ENCODE measurements at regions of chr3 and their contacts with region 1.

Region 1: GRCh38 chr3:141360888-141361598 is 7.3 kb upstream of the ZBTB38 start:
- DNase-seq: no peak
- H3K4me3 ChIP-seq: no peak overlapping the region
- H3K27ac ChIP-seq: no peak overlapping the region
- H3K4me1 ChIP-seq: no peaks in the 10 kb centered on the region
- H3K27me3 ChIP-seq: no peaks in the 10 kb centered on the region
- CTCF ChIP-seq: peak in 2 of 3 experiments; percentile 74 to 87; a peak in 3 of 4 replicates
- EP300 ChIP-seq: no peak
- POLR2A ChIP-seq: no peak
- RAD21 ChIP-seq: peak; percentile 90 to 97

Region 2: DNA sequence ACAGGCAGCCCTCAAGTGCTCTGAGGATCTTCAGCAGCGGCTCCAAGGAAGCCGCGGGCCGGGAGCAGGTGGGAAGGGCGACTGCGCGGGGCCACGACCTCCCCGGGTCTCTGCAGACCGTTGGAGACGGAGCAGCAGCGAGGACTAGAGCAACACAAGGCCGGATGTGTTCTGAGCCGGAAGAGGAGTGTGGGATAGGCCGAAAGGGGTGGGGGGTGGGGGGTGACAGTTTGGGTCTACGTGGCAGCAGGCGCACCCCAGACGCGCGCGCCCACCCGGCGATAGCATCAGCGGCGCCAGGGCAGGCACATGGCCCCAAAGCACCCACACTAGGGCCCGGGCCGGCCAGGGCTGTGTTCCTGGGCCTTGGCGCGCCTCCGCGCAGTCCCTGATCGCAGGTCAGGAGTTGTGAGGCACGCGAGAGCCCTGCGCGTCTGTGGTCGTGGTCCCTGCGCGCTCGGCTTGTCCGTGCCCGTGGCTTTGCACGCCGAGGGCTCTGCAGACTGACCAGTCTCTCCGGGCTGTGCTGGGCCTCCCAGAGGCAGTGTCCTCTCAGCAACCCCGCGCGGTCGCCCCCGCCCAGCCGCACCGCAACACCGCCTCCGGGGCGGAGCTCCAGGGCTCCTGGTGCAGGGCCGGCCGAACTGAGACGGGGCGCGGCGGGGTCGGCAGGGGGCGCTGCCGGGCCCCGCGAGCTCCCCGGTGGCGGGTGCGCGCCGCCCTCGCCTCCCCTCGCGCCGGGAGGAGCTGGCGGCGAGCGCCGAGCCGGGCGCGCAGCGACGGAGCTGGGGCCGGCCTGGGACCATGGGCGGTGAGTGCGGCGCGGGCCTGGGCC is 129.7 kb before region 1 on chr3 and contains the start of gene PXYLP1:
- CTCF ChIA-PET with region 1: no interaction called
- POLR2A ChIA-PET with region 1: no interaction called
- DNase-seq: peak; percentile 41 to 94
- H3K4me3 ChIP-seq: peak within 1 kb of the TSS; percentile 65 to 78 (median 68)
- H3K27ac ChIP-seq: no peak within 1 kb of the TSS; the same call in 1 of the 2 replicates
- H3K4me1 ChIP-seq: peaks cover 4 to 12% (median 6%) of the 10 kb centered on the region in 4 experiments; a peak in 5 of 7 replicates
- H3K27me3 ChIP-seq: peaks cover 0 to 21% (median 15%) of the 10 kb centered on the region in 4 experiments; a peak in 4 of 7 replicates
- CTCF ChIP-seq: peak; percentile 68 to 86 (median 76)
- EP300 ChIP-seq: no peak
- POLR2A ChIP-seq: peak in 1 of 2 experiments; percentile 67; a peak in 1 of 3 replicates
- RAD21 ChIP-seq: peak; percentile 12 to 62; a peak in 3 of 4 replicates
- total RNA-seq, gene PXYLP1: 17.6 and 19.4 TPM in 2 replicates

Region 3: GRCh38 chr3:141331377-141332318 is 29.4 kb before region 1 on chr3:
- CTCF ChIA-PET with region 1: interaction called, 10 read pairs
- POLR2A ChIA-PET with region 1: no interaction called
- DNase-seq: no peak
- H3K4me3 ChIP-seq: no peak overlapping the region
- H3K27ac ChIP-seq: no peak overlapping the region
- H3K4me1 ChIP-seq: peaks cover 0 to 6% (median 3%) of the 10 kb centered on the region in 4 experiments; a peak in 3 of 7 replicates
- H3K27me3 ChIP-seq: no peaks in the 10 kb centered on the region
- CTCF ChIP-seq: no peak
- EP300 ChIP-seq: no peak
- POLR2A ChIP-seq: no peak
- RAD21 ChIP-seq: no peak

Region 4: DNA sequence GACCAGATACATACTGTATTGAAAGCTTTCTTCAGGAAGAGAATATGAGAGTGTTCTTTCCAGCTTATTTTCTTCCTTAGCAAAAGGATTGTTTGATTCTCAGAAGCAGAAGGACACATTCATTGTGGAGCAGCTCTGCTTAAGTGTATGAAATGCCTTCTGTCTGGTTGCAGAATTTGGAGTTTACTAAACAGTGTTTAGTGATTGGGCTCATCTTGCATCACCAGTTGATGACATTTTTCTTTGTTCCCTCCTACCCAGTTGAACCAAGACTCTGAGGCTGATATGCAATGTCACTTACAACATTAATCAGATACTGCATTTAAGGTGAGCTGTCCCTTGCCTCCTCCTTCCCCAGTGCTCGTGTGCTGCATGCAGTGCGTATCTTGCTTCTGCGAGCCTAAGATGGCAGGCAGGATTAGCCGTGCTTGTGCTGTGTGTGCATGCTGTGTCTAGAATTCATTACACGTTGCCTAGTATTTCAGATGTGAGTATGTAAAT is 25.6 kb after region 1 on chr3:
- CTCF ChIA-PET with region 1: interaction called, 31 read pairs
- POLR2A ChIA-PET with region 1: no interaction called
- DNase-seq: no peak
- H3K4me3 ChIP-seq: no peak overlapping the region
- H3K27ac ChIP-seq: no peak overlapping the region
- H3K4me1 ChIP-seq: peaks cover 0 to 11% (median 5%) of the 10 kb centered on the region in 4 experiments; a peak in 4 of 7 replicates
- H3K27me3 ChIP-seq: no peaks in the 10 kb centered on the region
- CTCF ChIP-seq: no peak
- EP300 ChIP-seq: no peak
- POLR2A ChIP-seq: no peak
- RAD21 ChIP-seq: no peak

Region 5: DNA sequence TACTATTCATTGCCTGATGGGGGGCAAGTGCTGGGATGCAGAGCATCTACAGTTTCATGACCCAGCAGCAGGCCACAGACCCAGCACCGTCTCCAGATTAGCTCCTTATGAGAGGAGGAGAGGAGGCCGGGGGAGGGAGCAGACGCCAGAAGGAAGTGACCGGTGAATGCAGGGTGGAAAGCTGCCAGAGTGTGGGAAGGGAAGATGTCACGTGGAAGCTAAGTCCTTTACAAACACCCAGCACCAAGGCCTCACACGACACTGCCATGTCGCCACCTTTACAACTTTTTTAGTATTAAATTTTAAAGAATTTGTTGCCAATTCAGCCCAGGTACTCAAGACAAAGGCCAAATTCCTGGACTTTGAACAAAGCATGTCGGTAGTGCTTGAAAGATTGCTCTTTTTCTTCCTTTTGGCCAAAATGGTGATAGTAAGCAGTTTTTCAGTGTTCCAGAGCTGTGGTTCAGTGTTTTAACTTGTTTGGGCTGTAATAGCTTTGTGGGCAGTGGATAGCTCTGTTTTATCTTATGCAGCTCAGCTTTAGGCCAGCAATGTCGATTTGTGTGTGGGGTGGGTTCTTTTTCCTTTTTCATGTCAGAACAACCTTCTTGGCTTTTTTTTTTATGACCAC is 65.5 kb after region 1 on chr3:
- CTCF ChIA-PET with region 1: interaction called, 30 read pairs
- POLR2A ChIA-PET with region 1: no interaction called
- DNase-seq: no peak
- H3K4me3 ChIP-seq: no peak overlapping the region
- H3K27ac ChIP-seq: no peak overlapping the region
- H3K4me1 ChIP-seq: peaks cover 0 to 8% (median 3%) of the 10 kb centered on the region in 4 experiments; a peak in 4 of 7 replicates
- H3K27me3 ChIP-seq: no peaks in the 10 kb centered on the region
- CTCF ChIP-seq: no peak
- EP300 ChIP-seq: no peak
- POLR2A ChIP-seq: no peak
- RAD21 ChIP-seq: no peak

Region 6: GRCh38 chr3:141441381-141442364 is 80.6 kb after region 1 on chr3:
- CTCF ChIA-PET with region 1: interaction called, 131 read pairs
- POLR2A ChIA-PET with region 1: no interaction called
- DNase-seq: peak in 1 of 2 experiments; percentile 90
- H3K4me3 ChIP-seq: no peak overlapping the region
- H3K27ac ChIP-seq: no peak overlapping the region
- H3K4me1 ChIP-seq: no peaks in the 10 kb centered on the region
- H3K27me3 ChIP-seq: no peaks in the 10 kb centered on the region
- CTCF ChIP-seq: peak; percentile 84 to 90 (median 89)
- EP300 ChIP-seq: 0 out of 3 replicates have a peak, but pooled peaks of 1 of the 2 experiments have one; percentile 8
- POLR2A ChIP-seq: no peak
- RAD21 ChIP-seq: peak; percentile 74 to 83

Region 7: GRCh38 chr3:141460097-141460704 is 99.2 kb after region 1 on chr3:
- CTCF ChIA-PET with region 1: interaction called, 101 read pairs
- POLR2A ChIA-PET with region 1: no interaction called
- DNase-seq: peak; percentile 69 to 92
- H3K4me3 ChIP-seq: no peak overlapping the region
- H3K27ac ChIP-seq: no peak overlapping the region
- H3K4me1 ChIP-seq: peaks cover 0 to 3% (median 0%) of the 10 kb centered on the region in 4 experiments; a peak in 3 of 7 replicates
- H3K27me3 ChIP-seq: no peaks in the 10 kb centered on the region
- CTCF ChIP-seq: peak; percentile 92 to 94 (median 94)
- EP300 ChIP-seq: no peak
- POLR2A ChIP-seq: no peak
- RAD21 ChIP-seq: peak; percentile 96 to 97

Measured in H1 (cell line).